ENCODE measurements at regions of chr16 and their contacts with region 1.

Region 1: GRCh38 chr16:78333808-78334207 is 234.4 kb downstream of the WWOX start:
- DNase-seq: no peak

Region 2: GRCh38 chr16:78353610-78354275 is 19.9 kb after region 1 on chr16:
- intact Hi-C with region 1: loop called (anchors 1 kb)
- DNase-seq: no peak

Measured in head of caudate nucleus (tissue), 42 donors.